Activated CD4-positive, alpha-beta T cell treated with anti-CD3 and anti-CD28 coated beads for 36 hours (primary cell): ENCODE measurements at regions of chr6 and their contacts with region 1.

Region 1: DNA sequence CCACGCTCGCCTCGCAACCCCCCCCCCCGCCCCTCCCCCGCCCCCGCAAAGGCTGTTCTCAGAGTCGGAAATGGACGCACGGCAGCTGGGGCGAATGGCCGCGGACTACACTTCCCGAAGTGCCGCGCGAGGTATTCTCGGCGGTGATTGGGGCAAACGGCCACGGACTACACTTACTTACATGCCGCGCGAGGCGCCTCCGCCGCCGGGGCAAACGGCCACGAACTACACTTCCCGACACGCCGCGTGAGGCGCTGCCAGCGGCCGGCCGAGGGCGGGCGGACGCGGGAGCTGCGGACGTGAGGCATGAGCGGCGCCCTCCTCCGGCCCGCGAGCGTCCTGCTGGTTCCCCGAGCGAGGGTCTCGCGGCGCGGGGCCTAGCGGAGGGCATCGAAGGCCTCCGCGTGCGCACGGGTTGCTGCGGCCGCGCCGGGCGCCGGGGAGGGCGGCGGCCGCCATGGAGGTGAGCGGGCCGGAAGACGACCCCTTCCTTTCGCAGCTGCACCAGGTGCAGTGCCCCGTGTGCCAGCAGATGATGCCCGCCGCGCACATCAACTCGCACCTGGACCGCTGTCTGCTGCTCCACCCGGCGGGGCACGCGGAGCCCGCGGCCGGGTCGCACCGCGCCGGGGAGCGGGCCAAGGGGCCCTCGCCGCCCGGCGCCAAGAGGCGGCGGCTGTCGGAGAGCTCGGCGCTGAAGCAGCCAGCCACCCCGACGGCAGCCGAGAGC is at the start of gene WRNIP1:
- DNase-seq: peak; percentile 98
- ATAC-seq: peak; percentile 90
- H3K4me3 Mint-ChIP-seq: peak within 1 kb of the TSS; percentile 94
- H3K27ac Mint-ChIP-seq: peak within 1 kb of the TSS; percentile 98
- H3K4me1 Mint-ChIP-seq: peaks cover 51% of the 10 kb centered on the region
- H3K27me3 Mint-ChIP-seq: no peaks in the 10 kb centered on the region
- total RNA-seq, gene WRNIP1: 41.6 to 42.3 TPM

Region 2: DNA sequence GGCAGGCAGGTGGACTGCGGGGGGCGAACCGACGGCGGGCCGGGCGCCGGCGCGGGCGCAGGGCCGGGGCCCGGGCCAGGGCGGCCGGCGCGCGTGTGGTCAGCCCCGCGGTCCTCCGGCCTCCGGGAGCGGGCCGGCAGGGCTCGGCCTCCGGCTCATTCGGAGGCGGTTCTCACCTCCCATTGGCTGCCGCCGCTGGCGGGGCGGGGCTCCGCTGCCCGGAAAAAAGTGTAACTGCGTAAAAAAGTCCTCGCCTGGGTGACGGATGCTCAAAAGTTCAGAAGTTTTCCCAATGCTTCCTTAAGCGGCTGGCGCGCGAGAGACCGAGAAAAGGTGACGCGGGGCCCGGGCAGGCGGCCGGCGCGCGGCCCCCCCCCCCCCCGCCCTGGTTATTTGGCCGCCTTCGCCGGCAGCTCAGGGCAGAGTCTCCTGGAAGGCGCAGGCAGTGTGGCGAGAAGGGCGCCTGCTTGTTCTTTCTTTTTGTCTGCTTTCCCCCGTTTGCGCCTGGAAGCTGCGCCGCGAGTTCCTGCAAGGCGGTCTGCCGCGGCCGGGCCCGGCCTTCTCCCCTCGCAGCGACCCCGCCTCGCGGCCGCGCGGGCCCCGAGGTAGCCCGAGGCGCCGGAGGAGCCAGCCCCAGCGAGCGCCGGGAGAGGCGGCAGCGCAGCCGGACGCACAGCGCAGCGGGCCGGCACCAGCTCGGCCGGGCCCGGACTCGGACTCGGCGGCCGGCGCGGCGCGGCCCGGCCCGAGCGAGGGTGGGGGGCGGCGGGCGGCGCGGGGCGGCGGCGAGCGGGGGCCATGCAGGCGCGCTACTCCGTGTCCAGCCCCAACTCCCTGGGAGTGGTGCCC is 1155.5 kb before region 1 on chr6 and contains the start of gene FOXC1:
- CTCF ChIA-PET with region 1: interaction called, 3 read pairs
- POLR2A ChIA-PET with region 1: no interaction called
- intact Hi-C with region 1: loop called in 1 of 2 experiments (anchors 5 kb)
- DNase-seq: peak; percentile 70
- ATAC-seq: peak; percentile 47
- H3K4me3 Mint-ChIP-seq: peak within 1 kb of the TSS; percentile 60
- H3K27ac Mint-ChIP-seq: no peak within 1 kb of the TSS
- H3K4me1 Mint-ChIP-seq: peaks cover 47% of the 10 kb centered on the region
- H3K27me3 Mint-ChIP-seq: peaks cover 58% of the 10 kb centered on the region
- total RNA-seq, gene FOXC1: 0.04 to 0.05 TPM

Region 3: DNA sequence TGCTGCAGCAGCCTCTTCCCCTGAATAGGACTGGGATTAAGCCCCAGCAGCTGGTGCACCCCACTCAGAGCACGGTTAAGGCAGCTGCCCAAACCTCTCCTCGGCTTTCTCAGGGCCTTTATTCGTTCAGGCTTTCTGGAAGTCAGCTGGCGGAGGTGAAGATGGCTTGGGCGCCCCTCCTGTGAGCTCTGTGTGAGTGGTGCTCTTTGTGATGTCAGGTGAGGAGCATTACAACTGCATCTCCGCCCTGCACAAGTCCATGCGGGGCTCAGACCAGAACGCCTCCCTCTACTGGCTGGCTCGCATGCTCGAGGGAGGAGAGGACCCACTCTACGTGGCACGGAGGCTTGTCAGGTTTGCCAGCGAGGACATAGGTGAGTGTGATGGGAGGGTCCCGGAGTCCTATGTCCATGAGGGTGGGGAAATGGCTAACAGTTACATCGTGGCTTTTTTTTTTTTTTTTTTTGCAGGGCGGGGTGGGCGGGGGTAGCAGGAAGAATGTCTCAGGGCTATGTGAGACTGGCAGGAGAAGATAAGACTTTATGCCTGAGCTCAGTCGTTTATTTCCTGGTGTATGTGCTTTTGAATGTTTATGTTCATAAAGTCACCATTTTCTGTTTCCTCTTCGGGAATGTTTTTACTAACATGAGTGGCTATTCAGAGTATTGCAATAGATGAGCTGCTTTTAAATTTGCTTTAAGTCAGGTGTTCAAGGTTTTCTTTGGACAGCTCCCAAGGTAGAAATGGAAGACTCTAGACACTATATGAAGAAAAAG is 18.0 kb after region 1 on chr6:
- CTCF ChIA-PET with region 1: interaction called, 13 read pairs
- POLR2A ChIA-PET with region 1: interaction called, 3 read pairs
- intact Hi-C with region 1: no loop called
- DNase-seq: peak; percentile 34
- ATAC-seq: peak; percentile 65
- H3K4me3 Mint-ChIP-seq: no peak overlapping the region
- H3K27ac Mint-ChIP-seq: no peak overlapping the region
- H3K4me1 Mint-ChIP-seq: peaks cover 15% of the 10 kb centered on the region
- H3K27me3 Mint-ChIP-seq: no peaks in the 10 kb centered on the region

Region 4: DNA sequence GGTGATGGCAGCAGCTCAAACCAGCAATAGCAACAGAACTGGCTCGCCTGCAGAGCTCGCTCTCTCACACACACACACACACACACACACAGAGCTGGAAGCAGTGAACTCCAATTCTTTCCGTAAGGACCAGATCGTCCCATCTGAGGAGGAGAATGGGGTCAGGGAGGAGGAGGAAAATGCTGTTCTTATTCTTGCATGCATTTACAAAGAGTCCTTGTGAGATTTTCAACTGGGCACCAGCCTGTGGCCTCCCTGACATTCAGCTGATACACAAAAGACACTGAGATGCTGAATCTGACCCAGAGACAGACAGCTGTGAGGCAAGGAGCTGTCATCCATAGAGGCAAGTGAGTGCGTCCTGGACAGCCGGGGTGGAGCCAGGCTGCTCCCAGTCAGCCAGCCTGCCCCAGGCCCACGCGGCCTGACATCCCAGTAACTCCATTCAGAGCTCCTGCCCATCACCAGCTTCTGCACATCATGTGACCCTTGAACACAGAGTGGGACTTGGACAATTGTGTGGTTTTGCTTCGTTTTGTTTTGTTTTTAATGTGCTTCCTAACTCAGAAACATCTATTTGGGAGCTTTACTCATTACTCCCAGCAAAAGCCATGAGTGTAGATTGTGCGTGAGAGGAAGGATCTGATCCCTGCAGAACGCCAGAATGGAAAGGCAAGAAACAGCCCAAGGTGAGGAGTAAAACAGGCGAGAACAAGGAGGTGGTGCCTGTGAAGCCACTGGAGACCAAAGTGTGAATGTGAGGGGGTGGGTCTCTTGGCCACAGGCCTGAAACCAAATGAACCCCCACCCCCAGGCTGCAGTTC is 135.7 kb after region 1 on chr6:
- CTCF ChIA-PET with region 1: interaction called, 3 read pairs
- POLR2A ChIA-PET with region 1: interaction called, 5 read pairs
- intact Hi-C with region 1: loop called in 1 of 2 experiments (anchors 2 kb)
- DNase-seq: peak; percentile 26
- ATAC-seq: no peak
- H3K4me3 Mint-ChIP-seq: peak overlapping the region; percentile 91
- H3K27ac Mint-ChIP-seq: peak overlapping the region; percentile 93
- H3K4me1 Mint-ChIP-seq: peaks cover 45% of the 10 kb centered on the region
- H3K27me3 Mint-ChIP-seq: no peaks in the 10 kb centered on the region

Region 5: GRCh38 chr6:2999618-3000557 is 234.6 kb after region 1 on chr6 and contains the start of gene NQO2:
- CTCF ChIA-PET with region 1: no interaction called
- POLR2A ChIA-PET with region 1: no interaction called
- intact Hi-C with region 1: loop called in 1 of 2 experiments (anchors 1 kb)
- DNase-seq: peak; percentile 96
- ATAC-seq: peak; percentile 80
- H3K4me3 Mint-ChIP-seq: peak within 1 kb of the TSS; percentile 83
- H3K27ac Mint-ChIP-seq: peak within 1 kb of the TSS; percentile 82
- H3K4me1 Mint-ChIP-seq: peaks cover 28% of the 10 kb centered on the region
- H3K27me3 Mint-ChIP-seq: no peaks in the 10 kb centered on the region
- total RNA-seq, gene NQO2: 40.7 to 44.2 TPM

Region 6: GRCh38 chr6:3118353-3119039 is 353.2 kb after region 1 on chr6 and contains the start of gene BPHL:
- CTCF ChIA-PET with region 1: no interaction called
- POLR2A ChIA-PET with region 1: no interaction called
- intact Hi-C with region 1: loop called in 1 of 2 experiments (anchors 1 kb)
- DNase-seq: peak; percentile 100
- ATAC-seq: peak; percentile 90
- H3K4me3 Mint-ChIP-seq: peak within 1 kb of the TSS; percentile 76
- H3K27ac Mint-ChIP-seq: peak within 1 kb of the TSS; percentile 60
- H3K4me1 Mint-ChIP-seq: peaks cover 22% of the 10 kb centered on the region
- H3K27me3 Mint-ChIP-seq: no peaks in the 10 kb centered on the region
- total RNA-seq, gene BPHL: 15.8 to 16.7 TPM